ENCODE measurements at regions of chr13 and their contacts with region 1.

Region 1: DNA sequence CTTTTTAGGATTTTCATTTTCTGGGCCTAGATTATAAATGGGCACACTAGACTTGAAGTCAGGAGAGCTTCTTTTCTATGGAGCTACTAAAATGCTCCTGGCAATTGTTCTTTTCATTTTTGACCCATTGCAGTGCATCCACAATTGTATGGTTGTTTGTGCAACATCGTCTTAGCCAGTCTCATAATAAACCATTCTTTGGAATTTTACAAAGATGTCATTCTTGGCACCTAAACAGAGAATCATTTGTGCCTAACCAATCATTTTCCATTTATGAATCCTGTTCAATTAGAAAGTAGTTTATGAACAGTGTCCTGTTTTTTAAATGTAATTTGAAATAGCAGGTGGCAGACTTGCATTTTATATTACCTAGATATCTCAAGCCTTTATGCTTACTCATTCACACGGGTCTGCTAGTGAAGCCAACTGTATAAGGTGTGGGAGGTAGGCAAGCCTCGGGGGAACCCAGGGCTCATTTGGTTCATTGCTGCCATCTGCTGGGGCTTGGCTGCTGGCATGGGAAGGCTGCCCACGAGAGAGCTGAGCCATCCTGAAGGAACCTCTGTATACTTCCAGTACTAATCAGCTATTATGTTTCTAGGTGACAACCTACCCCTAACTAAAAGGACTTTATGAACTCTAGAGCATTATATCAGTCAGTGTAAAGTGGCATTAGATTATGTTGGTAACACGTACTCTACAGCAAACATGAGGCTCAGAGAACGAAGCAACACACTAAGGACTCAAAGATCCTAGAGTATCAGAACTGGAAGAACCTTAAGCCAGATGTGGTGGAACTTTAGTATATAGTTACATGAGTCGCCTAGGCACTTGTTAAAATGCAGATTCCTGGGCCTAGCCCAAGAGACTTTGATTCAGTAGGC is 60.0 kb downstream of the TPT1 start:
- DNase-seq: peak; percentile 78
- ATAC-seq: peak; percentile 94
- H3K4me3 ChIP-seq: no peak overlapping the region
- H3K27ac ChIP-seq: no peak overlapping the region
- H3K4me1 ChIP-seq: no peaks in the 10 kb centered on the region
- H3K27me3 ChIP-seq: no peaks in the 10 kb centered on the region
- CTCF ChIP-seq: peak; percentile 89
- POLR2A ChIP-seq: no peak
- RAD21 ChIP-seq: peak; percentile 94

Region 2: GRCh38 chr13:44618326-44618725 is 662.7 kb before region 1 on chr13:
- CTCF ChIA-PET with region 1: no interaction called
- POLR2A ChIA-PET with region 1: no interaction called
- dilution Hi-C with region 1: no loop called
- in situ Hi-C with region 1: no loop called
- intact Hi-C with region 1: no loop called
- DNase-seq: peak; percentile 44
- ATAC-seq: 0 out of 2 replicates have a peak, but pooled peaks have one; percentile 37
- H3K4me3 ChIP-seq: no peak overlapping the region
- H3K27ac ChIP-seq: no peak overlapping the region
- H3K4me1 ChIP-seq: no peaks in the 10 kb centered on the region; the same call in 1 of the 2 replicates
- H3K27me3 ChIP-seq: no peaks in the 10 kb centered on the region
- CTCF ChIP-seq: no peak
- POLR2A ChIP-seq: no peak
- RAD21 ChIP-seq: no peak

Region 3: GRCh38 chr13:44719857-44720671 is 560.9 kb before region 1 on chr13:
- CTCF ChIA-PET with region 1: no interaction called
- POLR2A ChIA-PET with region 1: no interaction called
- dilution Hi-C with region 1: no loop called
- in situ Hi-C with region 1: no loop called
- intact Hi-C with region 1: no loop called
- DNase-seq: peak; percentile 75
- ATAC-seq: peak; percentile 63
- H3K4me3 ChIP-seq: no peak overlapping the region
- H3K27ac ChIP-seq: peak overlapping the region; percentile 50; the same call in 1 of the 2 replicates
- H3K4me1 ChIP-seq: peaks cover 8% of the 10 kb centered on the region
- H3K27me3 ChIP-seq: no peaks in the 10 kb centered on the region
- CTCF ChIP-seq: no peak
- POLR2A ChIP-seq: no peak
- RAD21 ChIP-seq: no peak

Region 4: GRCh38 chr13:45047394-45048310 is 233.3 kb before region 1 on chr13:
- CTCF ChIA-PET with region 1: interaction called, 12 read pairs
- POLR2A ChIA-PET with region 1: no interaction called
- dilution Hi-C with region 1: no loop called
- in situ Hi-C with region 1: no loop called
- intact Hi-C with region 1: loop called (anchors 1 kb)
- DNase-seq: peak; percentile 86
- ATAC-seq: peak; percentile 89
- H3K4me3 ChIP-seq: peak overlapping the region; percentile 45; the same call in 1 of the 2 replicates
- H3K27ac ChIP-seq: peak overlapping the region; percentile 67; the same call in 1 of the 2 replicates
- H3K4me1 ChIP-seq: peaks cover 6% of the 10 kb centered on the region
- H3K27me3 ChIP-seq: no peaks in the 10 kb centered on the region
- CTCF ChIP-seq: peak; percentile 98
- POLR2A ChIP-seq: peak; percentile 48; the same call in 1 of the 2 replicates
- RAD21 ChIP-seq: peak; percentile 100

Region 5: DNA sequence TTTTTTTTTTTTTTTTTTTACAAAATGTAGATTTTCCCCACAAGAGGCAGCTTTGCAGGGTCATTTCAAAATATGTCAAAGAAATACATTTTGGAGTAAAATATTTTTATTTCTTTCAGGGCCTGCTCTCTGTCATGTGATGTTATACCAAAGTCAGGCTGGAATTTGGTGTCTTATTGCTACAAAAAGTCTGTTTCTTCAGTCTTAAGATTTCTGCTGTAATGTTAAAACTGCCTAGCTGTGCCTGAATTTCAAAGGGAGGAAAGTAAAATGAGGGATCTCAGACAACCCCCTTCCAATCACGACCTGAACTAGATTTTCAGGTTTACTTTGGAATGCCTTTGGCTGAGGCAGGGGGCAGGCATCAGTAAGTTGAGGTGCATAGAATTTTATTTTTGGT is 173.5 kb before region 1 on chr13:
- CTCF ChIA-PET with region 1: no interaction called
- POLR2A ChIA-PET with region 1: interaction called, 17 read pairs
- dilution Hi-C with region 1: no loop called
- in situ Hi-C with region 1: no loop called
- intact Hi-C with region 1: no loop called
- DNase-seq: no peak
- ATAC-seq: no peak
- H3K4me3 ChIP-seq: no peak overlapping the region
- H3K27ac ChIP-seq: peak overlapping the region; percentile 82; the same call in 1 of the 2 replicates
- H3K4me1 ChIP-seq: peaks cover 18% of the 10 kb centered on the region
- H3K27me3 ChIP-seq: no peaks in the 10 kb centered on the region
- CTCF ChIP-seq: no peak
- POLR2A ChIP-seq: no peak
- RAD21 ChIP-seq: no peak

Region 6: DNA sequence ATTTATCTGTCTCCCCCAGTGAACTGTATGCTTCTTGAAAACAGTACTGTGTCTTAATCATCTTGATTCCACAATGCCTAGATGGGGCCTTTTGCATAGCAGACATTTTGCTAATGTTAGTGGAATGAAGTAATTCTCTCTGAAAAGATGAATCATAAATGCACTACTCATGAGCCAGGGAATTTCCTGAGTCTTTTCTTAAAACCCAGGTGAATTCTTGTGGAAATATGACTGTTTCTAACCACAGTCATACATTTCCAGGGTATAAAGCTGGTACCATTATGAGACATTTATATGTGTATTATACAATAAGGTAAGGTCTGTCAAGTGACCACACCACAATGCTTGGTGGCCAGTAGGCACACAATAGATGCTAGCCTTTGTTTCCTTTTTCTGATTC is 74.7 kb before region 1 on chr13:
- CTCF ChIA-PET with region 1: no interaction called
- POLR2A ChIA-PET with region 1: no interaction called
- dilution Hi-C with region 1: no loop called
- in situ Hi-C with region 1: no loop called
- intact Hi-C with region 1: loop called (anchors 5 kb)
- DNase-seq: peak; percentile 96
- ATAC-seq: peak; percentile 87
- H3K4me3 ChIP-seq: no peak overlapping the region
- H3K27ac ChIP-seq: peak overlapping the region; percentile 93
- H3K4me1 ChIP-seq: peaks cover 17% of the 10 kb centered on the region
- H3K27me3 ChIP-seq: no peaks in the 10 kb centered on the region
- CTCF ChIP-seq: no peak
- POLR2A ChIP-seq: no peak
- RAD21 ChIP-seq: no peak

Measured in IMR-90 (cell line).